ENCODE measurements at regions of chr3 and their contacts with region 1.

Region 1: GRCh38 chr3:53219895-53220483 is 35.8 kb downstream of the TKT start:
- DNase-seq: peak; percentile 63
- H3K4me3 ChIP-seq: no peak overlapping the region
- H3K27ac ChIP-seq: no peak overlapping the region
- H3K4me1 ChIP-seq: no peaks in the 10 kb centered on the region
- H3K27me3 ChIP-seq: no peaks in the 10 kb centered on the region
- CTCF ChIP-seq: peak; percentile 96 to 97

Region 2: GRCh38 chr3:53303957-53304356 is 84.0 kb after region 1 on chr3:
- CTCF ChIA-PET with region 1: no interaction called
- dilution Hi-C with region 1: no loop called
- in situ Hi-C with region 1: no loop called
- intact Hi-C with region 1: loop called (anchors 2 kb)
- DNase-seq: no peak
- H3K4me3 ChIP-seq: no peak overlapping the region
- H3K27ac ChIP-seq: no peak overlapping the region
- H3K4me1 ChIP-seq: no peaks in the 10 kb centered on the region
- H3K27me3 ChIP-seq: no peaks in the 10 kb centered on the region
- CTCF ChIP-seq: no peak

Region 3: DNA sequence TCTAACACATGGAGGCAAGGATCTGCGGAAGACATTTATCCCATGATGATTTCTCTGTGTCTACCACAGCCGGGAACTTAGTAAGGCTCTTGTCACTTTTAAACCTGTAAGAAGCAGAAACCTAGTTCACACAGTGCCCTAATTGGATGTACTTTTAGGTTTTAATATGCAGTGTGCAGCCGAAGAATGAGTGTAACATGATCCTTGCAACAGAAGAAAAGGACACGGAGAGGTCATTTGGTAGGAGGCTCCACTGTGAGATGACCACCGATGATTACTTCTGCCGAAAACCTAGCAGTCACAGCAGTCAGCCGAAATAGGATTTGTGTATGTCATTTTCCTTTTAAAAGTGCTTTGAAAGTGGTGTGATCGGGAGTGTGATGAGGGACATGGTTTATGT is 281.2 kb after region 1 on chr3:
- CTCF ChIA-PET with region 1: interaction called, 13 read pairs
- dilution Hi-C with region 1: no loop called
- in situ Hi-C with region 1: no loop called
- intact Hi-C with region 1: no loop called
- DNase-seq: no peak
- H3K4me3 ChIP-seq: no peak overlapping the region
- H3K27ac ChIP-seq: no peak overlapping the region
- H3K4me1 ChIP-seq: peaks cover 8% of the 10 kb centered on the region
- H3K27me3 ChIP-seq: peaks cover 7% of the 10 kb centered on the region
- CTCF ChIP-seq: no peak

Region 4: DNA sequence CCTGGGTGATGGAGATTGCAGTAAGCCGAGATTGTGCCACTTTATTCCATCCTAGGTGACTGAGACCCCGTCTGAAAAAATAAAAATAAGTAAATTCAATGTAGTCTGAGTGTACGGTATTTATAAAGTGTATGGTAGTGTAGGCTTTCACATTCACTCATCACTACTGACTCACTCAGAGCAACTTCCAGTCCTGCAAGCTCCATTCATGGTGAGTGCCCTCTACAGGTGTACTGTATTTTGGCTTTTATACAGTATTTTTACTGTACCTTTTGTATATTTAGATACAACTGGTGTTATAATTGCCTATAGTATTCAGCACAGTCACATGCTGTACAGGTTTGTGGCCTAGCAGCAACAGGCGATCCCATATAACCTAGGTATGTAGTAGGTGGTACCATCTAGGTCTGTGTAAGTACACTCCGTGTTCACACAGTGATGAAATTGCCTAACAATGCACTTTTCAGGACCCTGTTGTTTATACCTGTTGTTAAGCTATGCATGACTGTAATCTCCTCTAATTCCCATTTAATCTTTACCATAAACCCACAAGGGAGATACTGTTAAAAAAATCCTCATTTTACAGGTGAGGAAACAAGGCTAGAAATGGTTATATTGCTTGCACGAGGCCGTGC is 293.7 kb after region 1 on chr3:
- CTCF ChIA-PET with region 1: no interaction called
- dilution Hi-C with region 1: no loop called
- in situ Hi-C with region 1: no loop called
- intact Hi-C with region 1: loop called (anchors 1 kb)
- DNase-seq: peak; percentile 35
- H3K4me3 ChIP-seq: no peak overlapping the region
- H3K27ac ChIP-seq: no peak overlapping the region
- H3K4me1 ChIP-seq: no peaks in the 10 kb centered on the region
- H3K27me3 ChIP-seq: no peaks in the 10 kb centered on the region
- CTCF ChIP-seq: peak; percentile 41 to 50

Region 5: GRCh38 chr3:54356261-54357045 is 1136.5 kb after region 1 on chr3:
- CTCF ChIA-PET with region 1: no interaction called
- dilution Hi-C with region 1: no loop called
- in situ Hi-C with region 1: no loop called
- intact Hi-C with region 1: no loop called
- DNase-seq: no peak
- H3K4me3 ChIP-seq: no peak overlapping the region
- H3K27ac ChIP-seq: no peak overlapping the region
- H3K4me1 ChIP-seq: peaks cover 7% of the 10 kb centered on the region
- H3K27me3 ChIP-seq: no peaks in the 10 kb centered on the region
- CTCF ChIP-seq: no peak